Naive thymus-derived CD4-positive, alpha-beta T cell (primary cell): ENCODE measurements at regions of chr7 and their contacts with region 1.

Region 1: GRCh38 chr7:135170274-135170997 is at the start of gene CYREN:
- DNase-seq: peak; percentile 74 to 91 (median 82)
- ATAC-seq: peak; percentile 85
- H3K4me3 ChIP-seq: peak within 1 kb of the TSS; percentile 84
- H3K4me3 Mint-ChIP-seq: peak within 1 kb of the TSS; percentile 84 to 96 (median 90)
- H3K27ac ChIP-seq: peak within 1 kb of the TSS; percentile 95
- H3K27ac Mint-ChIP-seq: peak within 1 kb of the TSS; percentile 94 to 98 (median 95)
- H3K4me1 ChIP-seq: peaks cover 16 to 29% of the 10 kb centered on the region in 2 donors
- H3K4me1 Mint-ChIP-seq: peaks cover 31 to 59% (median 47%) of the 10 kb centered on the region in 7 donors
- H3K27me3 ChIP-seq: no peaks in the 10 kb centered on the region
- H3K27me3 Mint-ChIP-seq: no peaks in the 10 kb centered on the region
- total RNA-seq, gene CYREN: 25.6 to 50.7 (median 32.0) TPM

Region 2: DNA sequence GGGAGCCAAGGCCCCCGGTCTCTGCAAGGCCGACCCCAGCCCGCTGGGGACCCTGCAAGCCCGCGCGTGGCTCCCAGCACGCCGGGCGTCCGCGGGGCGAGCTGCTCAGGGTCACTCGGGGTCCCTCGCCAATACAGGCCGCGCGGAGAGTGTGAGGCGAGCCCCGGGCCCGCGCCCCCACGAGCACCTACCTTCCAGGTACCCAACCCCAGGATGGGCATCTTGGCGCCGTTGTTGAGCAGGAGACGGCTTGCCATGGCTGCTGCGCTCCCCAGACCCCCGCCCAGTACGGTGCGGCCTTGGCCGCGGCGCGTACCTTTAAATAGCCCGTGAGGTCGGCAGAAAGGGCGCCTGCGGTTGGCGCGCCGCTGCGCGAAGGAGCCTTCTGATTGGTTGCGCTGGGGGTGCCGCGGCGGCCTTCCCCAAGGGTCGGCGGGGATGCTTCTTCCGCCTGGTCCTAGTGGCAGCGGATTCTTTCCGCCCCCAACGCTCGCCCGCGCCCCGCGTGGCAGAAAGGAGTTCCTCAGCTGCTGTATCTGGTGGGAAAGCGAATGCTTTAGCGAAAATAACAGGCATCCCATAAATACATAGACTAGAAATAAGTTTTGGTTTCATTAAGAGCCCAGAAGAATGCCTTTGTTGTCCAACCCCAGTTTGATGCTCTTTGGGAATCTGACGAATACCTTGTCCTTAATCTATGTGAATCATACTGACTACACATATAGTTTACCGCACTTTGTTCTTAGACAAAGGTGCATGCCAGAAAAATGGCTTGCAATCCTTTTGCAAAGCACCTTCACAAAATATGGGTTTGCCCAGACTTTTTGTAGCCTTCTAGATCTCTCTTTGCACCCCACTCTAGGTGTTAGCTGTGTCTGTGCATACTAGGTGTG is 711.4 kb before region 1 on chr7 and contains the start of gene AKR1B1:
- CTCF ChIA-PET with region 1: no interaction called
- POLR2A ChIA-PET with region 1: interaction called, 3 read pairs
- intact Hi-C with region 1: loop called (anchors 5 to 10 kb)
- DNase-seq: peak; percentile 76 to 88 (median 84)
- ATAC-seq: peak; percentile 94
- H3K4me3 ChIP-seq: peak within 1 kb of the TSS; percentile 78
- H3K4me3 Mint-ChIP-seq: peak within 1 kb of the TSS; percentile 71 to 94 (median 89)
- H3K27ac ChIP-seq: peak within 1 kb of the TSS; percentile 72
- H3K27ac Mint-ChIP-seq: peak within 1 kb of the TSS; percentile 80 to 92 (median 84)
- H3K4me1 ChIP-seq: peaks cover 20 to 30% of the 10 kb centered on the region in 2 donors
- H3K4me1 Mint-ChIP-seq: peaks cover 30 to 55% (median 48%) of the 10 kb centered on the region in 7 donors
- H3K27me3 ChIP-seq: no peaks in the 10 kb centered on the region
- H3K27me3 Mint-ChIP-seq: no peaks in the 10 kb centered on the region
- total RNA-seq, gene AKR1B1: 62.2 to 108 (median 100) TPM

Region 3: GRCh38 chr7:134632937-134633540 is 537.4 kb before region 1 on chr7:
- CTCF ChIA-PET with region 1: interaction called, 15 read pairs
- POLR2A ChIA-PET with region 1: interaction called, 5 read pairs
- intact Hi-C with region 1: loop called in 1 of 2 experiments (anchors 1 kb)
- DNase-seq: peak in 7 of 9 donors; percentile 51 to 75 (median 64)
- ATAC-seq: peak; percentile 89
- H3K4me3 ChIP-seq: no peak overlapping the region
- H3K4me3 Mint-ChIP-seq: no peak overlapping the region
- H3K27ac ChIP-seq: no peak overlapping the region
- H3K27ac Mint-ChIP-seq: peak overlapping the region in 1 of 9 donors; percentile 1
- H3K4me1 ChIP-seq: peaks cover 12% of the 10 kb centered on the region in 2 donors
- H3K4me1 Mint-ChIP-seq: peaks cover 17 to 35% (median 23%) of the 10 kb centered on the region in 7 donors
- H3K27me3 ChIP-seq: peaks cover 0 to 5% of the 10 kb centered on the region in 2 donors
- H3K27me3 Mint-ChIP-seq: peaks cover 6 to 19% (median 12%) of the 10 kb centered on the region in 5 donors

Region 4: DNA sequence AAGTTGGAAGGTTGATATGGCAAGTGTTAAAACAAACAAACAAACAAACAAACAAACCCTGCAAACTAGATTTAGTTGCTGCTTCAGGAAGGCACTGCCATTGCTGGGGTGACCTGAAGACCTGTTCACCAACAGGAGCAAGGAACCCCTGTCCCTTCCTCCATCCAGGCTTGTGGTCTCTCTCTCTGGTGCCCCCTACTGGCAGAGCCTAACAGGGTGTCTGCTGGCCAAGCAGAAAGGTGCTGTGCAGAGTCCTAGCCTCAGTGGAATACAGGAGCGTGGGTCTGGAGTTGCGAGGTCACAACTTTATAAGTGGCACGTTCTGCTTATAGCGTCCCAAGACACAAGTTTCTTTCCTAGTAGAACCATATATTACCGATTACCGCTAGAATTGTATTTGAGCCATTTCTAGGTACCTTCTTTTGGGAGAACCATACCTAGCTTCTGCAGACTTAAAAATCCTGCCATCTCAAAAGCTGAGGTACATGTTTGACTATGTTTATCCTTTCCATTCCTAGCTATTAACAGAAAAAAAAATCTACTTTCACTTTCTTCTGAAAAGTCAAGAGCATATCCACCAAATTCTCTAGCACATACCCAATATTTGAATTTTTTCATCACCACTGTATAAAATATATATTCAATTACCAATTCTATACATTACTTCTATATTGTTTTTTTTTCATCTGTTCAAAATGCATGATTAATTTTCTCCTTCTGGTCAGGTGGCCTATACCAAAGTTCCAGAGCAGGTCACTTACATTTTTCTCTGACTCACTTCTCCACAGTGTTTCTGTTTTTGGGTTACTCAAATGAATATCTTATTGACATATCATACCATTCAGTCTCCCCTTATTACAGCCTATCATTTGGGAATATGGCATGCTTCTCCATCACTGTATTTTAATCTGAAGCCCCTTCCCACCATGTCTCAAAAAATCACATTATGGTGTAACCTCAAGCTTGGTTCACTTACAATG is 420.1 kb before region 1 on chr7:
- CTCF ChIA-PET with region 1: no interaction called
- POLR2A ChIA-PET with region 1: no interaction called
- intact Hi-C with region 1: loop called (anchors 5 kb)
- DNase-seq: peak; percentile 26 to 68 (median 49)
- ATAC-seq: peak; percentile 87
- H3K4me3 ChIP-seq: no peak overlapping the region
- H3K4me3 Mint-ChIP-seq: no peak overlapping the region
- H3K27ac ChIP-seq: no peak overlapping the region
- H3K27ac Mint-ChIP-seq: no peak overlapping the region
- H3K4me1 ChIP-seq: no peaks in the 10 kb centered on the region
- H3K4me1 Mint-ChIP-seq: peaks cover 0 to 10% (median 0%) of the 10 kb centered on the region in 7 donors
- H3K27me3 ChIP-seq: no peaks in the 10 kb centered on the region
- H3K27me3 Mint-ChIP-seq: no peaks in the 10 kb centered on the region

Region 5: GRCh38 chr7:134954197-134955082 is 216.0 kb before region 1 on chr7:
- CTCF ChIA-PET with region 1: interaction called, 12 read pairs
- POLR2A ChIA-PET with region 1: interaction called, 9 read pairs
- intact Hi-C with region 1: loop called in 1 of 2 experiments (anchors 1 kb)
- DNase-seq: peak in 6 of 9 donors; percentile 29 to 63 (median 48)
- ATAC-seq: peak; percentile 59
- H3K4me3 ChIP-seq: no peak overlapping the region
- H3K4me3 Mint-ChIP-seq: no peak overlapping the region
- H3K27ac ChIP-seq: no peak overlapping the region
- H3K27ac Mint-ChIP-seq: peak overlapping the region in 1 of 9 donors; percentile 26
- H3K4me1 ChIP-seq: no peaks in the 10 kb centered on the region
- H3K4me1 Mint-ChIP-seq: peaks cover 0 to under 1% (median 0%) of the 10 kb centered on the region in 7 donors
- H3K27me3 ChIP-seq: no peaks in the 10 kb centered on the region
- H3K27me3 Mint-ChIP-seq: no peaks in the 10 kb centered on the region

Region 6: GRCh38 chr7:135147899-135148721 is 22.3 kb before region 1 on chr7 and contains the start of gene TMEM140:
- CTCF ChIA-PET with region 1: interaction called, 23 read pairs
- POLR2A ChIA-PET with region 1: interaction called, 183 read pairs
- intact Hi-C with region 1: loop called (anchors 1 kb)
- DNase-seq: peak in 8 of 9 donors; percentile 56 to 88 (median 80)
- ATAC-seq: peak; percentile 84
- H3K4me3 ChIP-seq: peak within 1 kb of the TSS; percentile 71
- H3K4me3 Mint-ChIP-seq: peak within 1 kb of the TSS; percentile 83 to 95 (median 92)
- H3K27ac ChIP-seq: peak within 1 kb of the TSS; percentile 90
- H3K27ac Mint-ChIP-seq: peak within 1 kb of the TSS; percentile 93 to 99 (median 97)
- H3K4me1 ChIP-seq: peaks cover 31 to 38% of the 10 kb centered on the region in 2 donors
- H3K4me1 Mint-ChIP-seq: peaks cover 41 to 74% (median 70%) of the 10 kb centered on the region in 7 donors
- H3K27me3 ChIP-seq: no peaks in the 10 kb centered on the region
- H3K27me3 Mint-ChIP-seq: no peaks in the 10 kb centered on the region
- total RNA-seq, gene TMEM140: 17.8 to 44.7 (median 20.4) TPM

Region 7: DNA sequence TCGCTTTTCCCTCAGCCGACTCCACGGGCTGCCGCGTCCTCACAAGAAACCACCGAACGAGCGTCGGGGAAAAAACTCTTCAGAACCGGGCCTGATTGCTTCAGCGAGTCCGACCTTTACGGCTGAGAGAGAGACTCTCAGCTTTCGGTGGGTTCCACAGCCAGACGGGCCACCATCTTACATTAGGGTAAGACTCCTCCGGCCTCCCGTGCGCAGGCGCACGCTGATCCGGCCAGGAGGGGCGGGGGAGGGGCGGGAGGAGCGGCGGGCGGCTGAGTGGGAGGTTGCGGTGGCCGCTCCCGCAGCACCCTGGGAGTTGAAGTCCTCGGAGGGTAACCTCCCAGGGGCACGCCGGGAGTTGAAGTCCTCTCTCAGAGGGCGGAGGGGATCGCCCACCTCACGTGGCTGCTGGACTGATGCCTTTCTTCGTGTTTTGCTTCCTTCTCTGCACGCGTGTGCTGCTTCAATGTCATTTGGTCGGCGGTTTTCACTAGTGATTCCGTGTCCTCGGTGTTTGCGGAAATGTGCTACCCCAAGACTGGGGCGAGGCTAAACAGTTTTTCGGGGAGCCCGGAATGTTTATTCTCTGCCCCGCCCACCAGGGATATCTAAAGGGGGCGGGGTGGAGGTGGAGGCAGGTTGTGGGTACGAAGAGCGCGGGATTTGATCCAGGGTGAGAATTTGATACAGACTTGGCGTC is 339.6 kb after region 1 on chr7 and contains the start of gene CNOT4:
- CTCF ChIA-PET with region 1: no interaction called
- POLR2A ChIA-PET with region 1: interaction called, 4 read pairs
- intact Hi-C with region 1: loop called in 1 of 2 experiments (anchors 1 kb)
- DNase-seq: peak; percentile 82 to 97 (median 92)
- ATAC-seq: peak; percentile 96
- H3K4me3 ChIP-seq: peak within 1 kb of the TSS; percentile 78
- H3K4me3 Mint-ChIP-seq: no peak within 1 kb of the TSS
- H3K27ac ChIP-seq: peak within 1 kb of the TSS; percentile 97
- H3K27ac Mint-ChIP-seq: no peak within 1 kb of the TSS
- H3K4me1 ChIP-seq: peaks cover 12 to 15% of the 10 kb centered on the region in 2 donors
- H3K4me1 Mint-ChIP-seq: peaks cover 3 to 21% (median 14%) of the 10 kb centered on the region in 7 donors
- H3K27me3 ChIP-seq: no peaks in the 10 kb centered on the region
- H3K27me3 Mint-ChIP-seq: no peaks in the 10 kb centered on the region
- total RNA-seq, gene CNOT4: 28.7 to 39.4 (median 38.3) TPM